CD8-positive, alpha-beta T cell (primary cell): ENCODE measurements at regions of chr17 and their contacts with region 1.

Region 1: GRCh38 chr17:19928299-19928698 is 49.3 kb downstream of the AKAP10 start:
- DNase-seq: no peak
- ATAC-seq: no peak
- H3K4me3 ChIP-seq: no peak overlapping the region
- H3K4me3 Mint-ChIP-seq: no peak overlapping the region
- H3K27ac ChIP-seq: no peak overlapping the region
- H3K27ac Mint-ChIP-seq: no peak overlapping the region
- H3K4me1 ChIP-seq: no peaks in the 10 kb centered on the region
- H3K4me1 Mint-ChIP-seq: peaks cover 6% of the 10 kb centered on the region
- H3K27me3 ChIP-seq: no peaks in the 10 kb centered on the region
- H3K27me3 Mint-ChIP-seq: no peaks in the 10 kb centered on the region
- CTCF ChIP-seq: no peak

Region 2: GRCh38 chr17:19948113-19948943 is 20.0 kb after region 1 on chr17:
- CTCF ChIA-PET with region 1: interaction called, 3 read pairs
- POLR2A ChIA-PET with region 1: no interaction called
- intact Hi-C with region 1: loop called in 1 of 2 experiments (anchors 1 kb)
- DNase-seq: no peak
- ATAC-seq: no peak
- H3K4me3 ChIP-seq: no peak overlapping the region
- H3K4me3 Mint-ChIP-seq: peak overlapping the region; percentile 6
- H3K27ac ChIP-seq: peak overlapping the region in 1 of 2 experiments; percentile 24
- H3K27ac Mint-ChIP-seq: peak overlapping the region; percentile 81
- H3K4me1 ChIP-seq: peaks cover 20% of the 10 kb centered on the region
- H3K4me1 Mint-ChIP-seq: peaks cover 57% of the 10 kb centered on the region
- H3K27me3 ChIP-seq: no peaks in the 10 kb centered on the region
- H3K27me3 Mint-ChIP-seq: no peaks in the 10 kb centered on the region
- CTCF ChIP-seq: no peak

Region 3: GRCh38 chr17:20073055-20073979 is 145.0 kb after region 1 on chr17:
- CTCF ChIA-PET with region 1: no interaction called
- POLR2A ChIA-PET with region 1: no interaction called
- intact Hi-C with region 1: no loop called
- DNase-seq: peak in 8 of 9 experiments; percentile 31 to 67 (median 44)
- ATAC-seq: peak; percentile 81
- H3K4me3 ChIP-seq: peak overlapping the region; percentile 7 to 44
- H3K4me3 Mint-ChIP-seq: peak overlapping the region; percentile 75
- H3K27ac ChIP-seq: peak overlapping the region in 1 of 2 experiments; percentile 60
- H3K27ac Mint-ChIP-seq: peak overlapping the region; percentile 75
- H3K4me1 ChIP-seq: peaks cover 23% of the 10 kb centered on the region
- H3K4me1 Mint-ChIP-seq: peaks cover 27% of the 10 kb centered on the region
- H3K27me3 ChIP-seq: no peaks in the 10 kb centered on the region
- H3K27me3 Mint-ChIP-seq: no peaks in the 10 kb centered on the region
- CTCF ChIP-seq: no peak